Activated CD4-positive, alpha-beta memory T cell treated with anti-CD3 and anti-CD28 coated beads, Interleukin-2, amount 10 ng/mL, durations not matched to agents 7 days and 5 days (primary cell): ENCODE measurements at regions of chr10 and their contacts with region 1.

Region 1: DNA sequence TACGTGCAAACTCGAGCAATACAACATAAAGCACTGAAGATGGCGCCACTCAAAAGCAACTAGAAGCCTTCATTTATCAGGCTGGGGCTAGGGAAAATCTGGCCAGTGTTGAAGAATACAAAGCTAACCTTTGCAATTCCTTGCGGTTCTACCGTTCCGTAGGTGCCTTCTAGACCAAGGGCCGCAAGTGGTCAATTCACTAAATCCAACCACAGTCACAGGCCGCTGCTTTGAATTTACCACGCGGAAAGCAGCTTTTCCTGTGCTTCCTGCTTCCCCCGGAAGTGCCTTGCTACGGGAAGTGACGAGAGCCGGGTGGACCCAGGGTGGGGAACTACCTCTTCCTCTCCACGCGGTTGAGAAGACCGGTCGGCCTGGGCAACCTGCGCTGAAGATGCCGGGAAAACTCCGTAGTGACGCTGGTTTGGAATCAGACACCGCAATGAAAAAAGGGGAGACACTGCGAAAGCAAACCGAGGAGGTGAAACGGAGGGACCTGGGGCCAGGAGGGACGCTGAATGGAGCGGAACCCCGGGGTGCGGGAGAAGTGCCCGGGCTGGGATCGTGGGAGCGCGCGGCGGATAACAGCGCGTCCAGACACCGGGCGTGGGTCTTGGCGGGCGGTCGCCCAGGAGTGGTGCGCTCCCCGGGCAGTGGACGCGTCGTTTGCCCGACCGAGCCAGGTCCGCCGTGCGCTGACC is at the start of gene DDX21:
- DNase-seq: peak; percentile 91
- H3K4me3 Mint-ChIP-seq: peak within 1 kb of the TSS; percentile 94
- H3K27ac Mint-ChIP-seq: peak within 1 kb of the TSS; percentile 98
- H3K4me1 Mint-ChIP-seq: peaks cover 36% of the 10 kb centered on the region
- H3K27me3 Mint-ChIP-seq: no peaks in the 10 kb centered on the region
- total RNA-seq, gene DDX21: 82.3 to 82.7 TPM

Region 2: DNA sequence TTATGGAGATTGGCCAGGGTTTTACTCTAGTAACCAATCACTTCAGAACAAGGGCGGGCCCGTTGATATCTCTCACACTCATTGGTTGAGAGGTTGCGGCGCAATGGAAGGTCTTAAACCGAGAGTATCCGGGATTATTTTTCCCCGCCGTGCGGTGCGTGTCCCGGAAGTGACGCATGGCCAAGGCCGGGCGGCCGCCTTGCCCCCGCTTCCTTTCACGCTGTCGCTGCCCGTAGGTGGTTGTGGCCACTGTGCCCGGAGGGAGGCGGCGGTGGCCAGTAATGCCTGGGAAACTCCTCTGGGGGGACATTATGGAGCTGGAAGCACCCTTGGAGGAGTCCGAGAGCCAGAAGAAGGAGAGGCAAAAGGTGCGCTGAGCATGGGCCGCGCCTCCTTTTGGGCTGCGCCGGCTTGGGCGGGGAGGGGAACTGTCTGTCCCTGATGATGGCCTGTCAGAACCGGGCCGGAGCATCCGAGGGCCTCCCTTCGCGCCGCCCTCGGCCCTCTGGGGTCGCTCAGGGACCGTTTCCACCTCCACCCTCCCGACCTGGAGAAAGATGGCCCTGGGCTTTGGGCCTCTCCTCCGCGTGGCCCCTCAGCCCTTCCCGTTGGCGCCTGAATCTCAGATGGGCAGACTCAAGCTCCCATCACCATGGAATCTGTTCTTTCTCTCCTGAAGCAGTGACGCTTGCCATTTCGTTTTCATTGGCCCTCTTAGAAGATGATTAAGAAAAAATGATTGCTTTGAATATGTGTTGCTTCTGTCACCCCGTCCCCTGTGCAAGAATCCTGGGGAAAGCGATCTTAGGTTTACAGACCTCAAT is 54.7 kb before region 1 on chr10 and contains the start of gene DDX50:
- CTCF ChIA-PET with region 1: interaction called, 5 read pairs
- POLR2A ChIA-PET with region 1: interaction called, 35 read pairs
- DNase-seq: peak; percentile 97
- H3K4me3 Mint-ChIP-seq: peak within 1 kb of the TSS; percentile 93
- H3K27ac Mint-ChIP-seq: peak within 1 kb of the TSS; percentile 95
- H3K4me1 Mint-ChIP-seq: peaks cover 47% of the 10 kb centered on the region
- H3K27me3 Mint-ChIP-seq: no peaks in the 10 kb centered on the region
- total RNA-seq, gene DDX50: 51.9 to 56.2 TPM

Region 3: GRCh38 chr10:68981074-68981473 is 25.1 kb after region 1 on chr10:
- CTCF ChIA-PET with region 1: interaction called, 14 read pairs
- POLR2A ChIA-PET with region 1: interaction called, 5 read pairs
- DNase-seq: no peak
- H3K4me3 Mint-ChIP-seq: no peak overlapping the region
- H3K27ac Mint-ChIP-seq: no peak overlapping the region
- H3K4me1 Mint-ChIP-seq: peaks cover 9% of the 10 kb centered on the region
- H3K27me3 Mint-ChIP-seq: no peaks in the 10 kb centered on the region

Region 4: GRCh38 chr10:69045441-69046300 is 89.7 kb after region 1 on chr10:
- CTCF ChIA-PET with region 1: no interaction called
- POLR2A ChIA-PET with region 1: interaction called, 10 read pairs
- DNase-seq: peak; percentile 53
- H3K4me3 Mint-ChIP-seq: peak overlapping the region; percentile 56
- H3K27ac Mint-ChIP-seq: peak overlapping the region; percentile 98
- H3K4me1 Mint-ChIP-seq: peaks cover 62% of the 10 kb centered on the region
- H3K27me3 Mint-ChIP-seq: no peaks in the 10 kb centered on the region

Region 5: GRCh38 chr10:69092959-69093850 is 137.2 kb after region 1 on chr10:
- CTCF ChIA-PET with region 1: interaction called, 27 read pairs
- POLR2A ChIA-PET with region 1: interaction called, 22 read pairs
- DNase-seq: peak; percentile 88
- H3K4me3 Mint-ChIP-seq: peak overlapping the region; percentile 53
- H3K27ac Mint-ChIP-seq: peak overlapping the region; percentile 72
- H3K4me1 Mint-ChIP-seq: peaks cover 63% of the 10 kb centered on the region
- H3K27me3 Mint-ChIP-seq: no peaks in the 10 kb centered on the region

Region 6: GRCh38 chr10:69558559-69558958 is 602.6 kb after region 1 on chr10:
- CTCF ChIA-PET with region 1: no interaction called
- POLR2A ChIA-PET with region 1: no interaction called
- DNase-seq: peak; percentile 57
- H3K4me3 Mint-ChIP-seq: no peak overlapping the region
- H3K27ac Mint-ChIP-seq: no peak overlapping the region
- H3K4me1 Mint-ChIP-seq: peaks cover 11% of the 10 kb centered on the region
- H3K27me3 Mint-ChIP-seq: peaks cover 16% of the 10 kb centered on the region